Uterus (tissue), 4 donors: ENCODE measurements at regions of chr21 and their contacts with region 1.

Region 1: DNA sequence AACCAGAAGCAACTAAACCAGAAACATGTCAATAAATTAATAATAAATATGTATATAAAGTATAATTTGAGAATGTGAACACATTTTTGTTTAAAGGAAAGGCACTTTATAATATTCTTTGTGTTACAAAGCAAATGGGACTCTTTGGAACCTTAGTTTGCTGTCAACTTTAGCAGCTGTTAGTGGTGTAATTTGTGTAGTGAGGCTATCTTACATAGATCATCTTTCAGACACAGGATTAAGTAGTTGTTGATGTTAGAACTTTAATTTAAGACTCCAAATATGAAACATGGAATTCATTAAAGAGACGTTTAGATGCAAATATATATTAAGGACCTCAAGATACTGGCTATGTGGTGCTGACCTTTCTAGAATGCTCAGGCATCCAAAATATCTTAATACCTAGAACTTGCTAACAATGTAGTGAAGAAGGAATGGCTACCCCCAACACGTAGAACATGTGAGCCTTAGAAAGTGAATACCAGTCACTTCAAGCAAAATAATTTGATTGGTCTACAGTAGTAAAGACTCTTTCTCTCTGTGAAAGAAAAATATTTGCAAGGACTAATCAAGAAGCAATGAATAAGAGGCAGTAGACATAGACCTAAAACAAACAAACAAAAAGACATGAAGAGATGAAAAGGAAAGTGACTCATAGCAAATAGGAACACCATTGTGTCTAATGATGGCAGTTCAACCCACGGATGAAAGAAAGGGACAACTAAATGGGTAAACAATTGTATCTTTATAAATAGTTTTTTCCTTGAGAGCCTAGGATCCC is 811.4 kb downstream of the USP25 start:
- DNase-seq: no peak
- H3K4me3 ChIP-seq: no peak overlapping the region
- H3K27ac ChIP-seq: peak overlapping the region; percentile 35 to 50
- H3K4me1 ChIP-seq: no peaks in the 10 kb centered on the region
- H3K27me3 ChIP-seq: no peaks in the 10 kb centered on the region
- CTCF ChIP-seq: no peak
- POLR2A ChIP-seq: no peak

Region 2: DNA sequence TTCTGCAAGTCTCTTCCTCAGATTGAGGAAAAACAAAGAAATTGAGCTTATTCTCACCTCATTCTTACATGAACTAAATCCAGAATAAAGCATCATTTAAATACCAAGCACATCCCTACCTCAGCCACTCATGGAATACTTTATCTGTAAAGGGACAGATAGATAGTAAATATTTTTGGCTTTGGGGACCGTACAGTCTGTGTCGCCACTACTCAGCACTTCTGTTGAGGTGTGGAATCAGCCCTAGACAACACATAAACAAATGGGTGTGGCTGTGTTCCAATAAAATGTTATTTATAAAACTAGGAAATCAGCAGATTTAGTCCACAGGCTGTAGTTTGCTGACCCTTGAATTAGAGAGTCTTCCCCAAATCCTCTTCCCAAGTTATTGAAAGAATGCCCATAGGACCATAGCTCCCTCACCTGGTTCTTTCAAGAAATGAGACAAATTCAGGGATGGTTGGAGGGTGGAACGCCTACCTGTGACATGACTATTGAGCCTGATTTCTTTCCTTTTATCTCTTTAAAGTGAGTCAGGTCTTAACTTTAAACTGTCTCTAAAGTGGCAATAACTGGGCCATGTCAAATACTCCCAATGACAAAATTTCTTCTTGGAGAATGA is 67.2 kb after region 1 on chr21:
- intact Hi-C with region 1: loop called (anchors 10 kb)
- DNase-seq: no peak
- H3K4me3 ChIP-seq: no peak overlapping the region
- H3K27ac ChIP-seq: no peak overlapping the region
- H3K4me1 ChIP-seq: no peaks in the 10 kb centered on the region
- H3K27me3 ChIP-seq: no peaks in the 10 kb centered on the region
- CTCF ChIP-seq: no peak
- POLR2A ChIP-seq: no peak